ENCODE measurements at regions of chr3 and their contacts with region 1.

Region 1: GRCh38 chr3:119498186-119498987 is at the start of gene TIMMDC1:
- DNase-seq: peak; percentile 95 to 98 (median 97)
- ATAC-seq: peak; percentile 99
- H3K4me3 ChIP-seq: peak within 1 kb of the TSS; percentile 97
- H3K4me3 Mint-ChIP-seq: peak within 1 kb of the TSS; percentile 95 to 100 (median 99)
- H3K27ac ChIP-seq: peak within 1 kb of the TSS; percentile 96
- H3K27ac Mint-ChIP-seq: peak within 1 kb of the TSS; percentile 98 to 100 (median 99)
- H3K4me1 ChIP-seq: peaks cover 18% of the 10 kb centered on the region in 2 donors
- H3K4me1 Mint-ChIP-seq: peaks cover 22 to 41% (median 34%) of the 10 kb centered on the region in 7 donors
- H3K27me3 ChIP-seq: no peaks in the 10 kb centered on the region
- H3K27me3 Mint-ChIP-seq: no peaks in the 10 kb centered on the region
- total RNA-seq, gene TIMMDC1: 27.1 to 80.1 (median 73.4) TPM

Region 2: DNA sequence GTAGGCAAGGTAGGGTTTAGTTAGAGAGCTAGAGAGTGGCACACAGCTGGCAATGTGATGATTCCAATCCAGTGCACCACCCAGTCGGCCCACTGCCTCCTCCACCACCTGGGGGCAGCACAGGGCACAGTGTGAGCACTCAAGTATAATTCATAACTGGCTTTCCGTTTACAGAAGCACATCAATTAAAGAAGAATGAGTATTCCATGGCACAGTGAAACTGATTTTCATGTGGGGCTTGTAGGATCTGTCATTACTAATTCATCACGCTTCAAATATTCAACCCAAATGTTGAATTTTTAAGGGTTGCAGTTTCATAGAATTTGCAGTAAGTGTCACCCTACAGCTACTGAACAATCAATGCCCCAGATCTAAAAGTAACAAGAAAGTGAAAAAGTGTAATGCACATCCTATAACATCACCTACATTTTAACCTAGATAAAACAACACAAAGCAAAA is 613.6 kb before region 1 on chr3:
- CTCF ChIA-PET with region 1: no interaction called
- POLR2A ChIA-PET with region 1: no interaction called
- intact Hi-C with region 1: no loop called
- DNase-seq: peak; percentile 58 to 83 (median 76)
- ATAC-seq: peak; percentile 88
- H3K4me3 ChIP-seq: no peak overlapping the region
- H3K4me3 Mint-ChIP-seq: peak overlapping the region in 5 of 10 donors; percentile 21 to 63 (median 40)
- H3K27ac ChIP-seq: no peak overlapping the region
- H3K27ac Mint-ChIP-seq: no peak overlapping the region
- H3K4me1 ChIP-seq: no peaks in the 10 kb centered on the region
- H3K4me1 Mint-ChIP-seq: peaks cover 0 to 18% (median 7%) of the 10 kb centered on the region in 7 donors
- H3K27me3 ChIP-seq: no peaks in the 10 kb centered on the region
- H3K27me3 Mint-ChIP-seq: peaks cover 8 to 16% (median 11%) of the 10 kb centered on the region in 5 donors

Region 3: DNA sequence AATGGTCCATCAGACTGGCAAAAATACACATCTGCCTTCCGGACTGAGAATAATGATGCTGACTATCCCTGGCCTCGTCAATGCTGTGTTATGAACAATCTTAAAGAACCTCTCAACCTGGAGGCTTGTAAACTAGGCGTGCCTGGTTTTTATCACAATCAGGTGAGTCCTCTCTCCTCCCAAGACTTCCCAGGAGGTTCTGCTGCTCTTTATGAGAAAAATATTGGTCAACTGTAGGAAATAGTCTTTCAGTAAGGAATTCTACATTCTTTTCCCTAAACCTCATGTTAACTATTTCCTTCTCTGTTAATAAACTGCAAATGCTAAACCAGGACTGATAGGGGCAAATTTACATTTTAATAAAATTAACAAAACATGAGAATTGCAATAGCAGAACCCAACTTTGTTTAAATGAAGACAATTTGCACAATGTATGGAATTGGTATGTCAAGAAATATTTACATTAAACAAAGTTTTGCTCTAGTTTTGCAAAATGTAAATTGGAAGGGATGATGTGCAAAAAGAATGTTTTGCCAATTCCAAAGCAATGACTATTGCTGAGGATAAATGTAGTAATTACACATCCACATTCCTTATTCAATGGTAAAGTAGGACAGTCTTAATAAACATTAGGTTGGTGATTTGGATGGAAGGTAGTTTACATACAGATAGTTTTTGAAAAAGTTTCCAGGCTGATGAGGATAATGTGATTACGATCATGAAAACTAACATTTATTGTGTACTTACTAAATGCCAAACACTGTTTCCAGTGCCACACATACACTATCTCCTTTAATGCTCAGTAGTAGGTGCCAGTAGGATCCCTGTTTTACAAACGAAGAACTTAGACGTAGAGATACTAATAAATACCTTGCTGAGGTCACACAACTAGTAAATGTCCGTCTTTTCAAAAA is 303.9 kb before region 1 on chr3:
- CTCF ChIA-PET with region 1: no interaction called
- POLR2A ChIA-PET with region 1: no interaction called
- intact Hi-C with region 1: no loop called
- DNase-seq: no peak
- ATAC-seq: no peak
- H3K4me3 ChIP-seq: no peak overlapping the region
- H3K4me3 Mint-ChIP-seq: no peak overlapping the region
- H3K27ac ChIP-seq: no peak overlapping the region
- H3K27ac Mint-ChIP-seq: no peak overlapping the region
- H3K4me1 ChIP-seq: no peaks in the 10 kb centered on the region
- H3K4me1 Mint-ChIP-seq: no peaks in the 10 kb centered on the region
- H3K27me3 ChIP-seq: no peaks in the 10 kb centered on the region
- H3K27me3 Mint-ChIP-seq: no peaks in the 10 kb centered on the region

Region 4: GRCh38 chr3:119293871-119294695 is 204.3 kb before region 1 on chr3 and contains the start of gene ARHGAP31:
- CTCF ChIA-PET with region 1: no interaction called
- POLR2A ChIA-PET with region 1: interaction called, 5 read pairs
- intact Hi-C with region 1: loop called (anchors 1 to 10 kb)
- DNase-seq: peak; percentile 70 to 91 (median 86)
- ATAC-seq: peak; percentile 77
- H3K4me3 ChIP-seq: peak within 1 kb of the TSS; percentile 50
- H3K4me3 Mint-ChIP-seq: peak within 1 kb of the TSS; percentile 68 to 95 (median 90)
- H3K27ac ChIP-seq: peak within 1 kb of the TSS; percentile 91
- H3K27ac Mint-ChIP-seq: peak within 1 kb of the TSS; percentile 71 to 99 (median 92)
- H3K4me1 ChIP-seq: peaks cover 22 to 26% of the 10 kb centered on the region in 2 donors
- H3K4me1 Mint-ChIP-seq: peaks cover 26 to 74% (median 63%) of the 10 kb centered on the region in 7 donors
- H3K27me3 ChIP-seq: no peaks in the 10 kb centered on the region
- H3K27me3 Mint-ChIP-seq: peaks cover 0 to 43% (median 0%) of the 10 kb centered on the region in 5 donors
- total RNA-seq, gene ARHGAP31: 3.0 to 11.9 (median 3.1) TPM

Region 5: GRCh38 chr3:119463171-119464169 is 34.9 kb before region 1 on chr3 and contains the start of gene TMEM39A:
- CTCF ChIA-PET with region 1: interaction called, 6 read pairs
- POLR2A ChIA-PET with region 1: interaction called, 92 read pairs
- intact Hi-C with region 1: loop called (anchors 1 kb)
- DNase-seq: peak; percentile 97 to 99 (median 98)
- ATAC-seq: peak; percentile 91
- H3K4me3 ChIP-seq: peak within 1 kb of the TSS; percentile 93
- H3K4me3 Mint-ChIP-seq: peak within 1 kb of the TSS; percentile 82 to 96 (median 93)
- H3K27ac ChIP-seq: peak within 1 kb of the TSS; percentile 86
- H3K27ac Mint-ChIP-seq: peak within 1 kb of the TSS; percentile 97 to 100 (median 99)
- H3K4me1 ChIP-seq: peaks cover 16 to 26% of the 10 kb centered on the region in 2 donors
- H3K4me1 Mint-ChIP-seq: peaks cover 22 to 56% (median 45%) of the 10 kb centered on the region in 7 donors
- H3K27me3 ChIP-seq: no peaks in the 10 kb centered on the region
- H3K27me3 Mint-ChIP-seq: peaks cover 0 to 4% (median 0%) of the 10 kb centered on the region in 5 donors
- total RNA-seq, gene TMEM39A: 34.9 to 59.5 (median 49.7) TPM

Region 6: GRCh38 chr3:119485563-119485962 is 12.8 kb before region 1 on chr3:
- CTCF ChIA-PET with region 1: interaction called, 4 read pairs
- POLR2A ChIA-PET with region 1: interaction called, 10 read pairs
- intact Hi-C with region 1: no loop called
- DNase-seq: no peak
- ATAC-seq: no peak
- H3K4me3 ChIP-seq: no peak overlapping the region
- H3K4me3 Mint-ChIP-seq: no peak overlapping the region
- H3K27ac ChIP-seq: no peak overlapping the region
- H3K27ac Mint-ChIP-seq: no peak overlapping the region
- H3K4me1 ChIP-seq: no peaks in the 10 kb centered on the region
- H3K4me1 Mint-ChIP-seq: peaks cover 0 to 6% (median 0%) of the 10 kb centered on the region in 7 donors
- H3K27me3 ChIP-seq: no peaks in the 10 kb centered on the region
- H3K27me3 Mint-ChIP-seq: no peaks in the 10 kb centered on the region

Region 7: DNA sequence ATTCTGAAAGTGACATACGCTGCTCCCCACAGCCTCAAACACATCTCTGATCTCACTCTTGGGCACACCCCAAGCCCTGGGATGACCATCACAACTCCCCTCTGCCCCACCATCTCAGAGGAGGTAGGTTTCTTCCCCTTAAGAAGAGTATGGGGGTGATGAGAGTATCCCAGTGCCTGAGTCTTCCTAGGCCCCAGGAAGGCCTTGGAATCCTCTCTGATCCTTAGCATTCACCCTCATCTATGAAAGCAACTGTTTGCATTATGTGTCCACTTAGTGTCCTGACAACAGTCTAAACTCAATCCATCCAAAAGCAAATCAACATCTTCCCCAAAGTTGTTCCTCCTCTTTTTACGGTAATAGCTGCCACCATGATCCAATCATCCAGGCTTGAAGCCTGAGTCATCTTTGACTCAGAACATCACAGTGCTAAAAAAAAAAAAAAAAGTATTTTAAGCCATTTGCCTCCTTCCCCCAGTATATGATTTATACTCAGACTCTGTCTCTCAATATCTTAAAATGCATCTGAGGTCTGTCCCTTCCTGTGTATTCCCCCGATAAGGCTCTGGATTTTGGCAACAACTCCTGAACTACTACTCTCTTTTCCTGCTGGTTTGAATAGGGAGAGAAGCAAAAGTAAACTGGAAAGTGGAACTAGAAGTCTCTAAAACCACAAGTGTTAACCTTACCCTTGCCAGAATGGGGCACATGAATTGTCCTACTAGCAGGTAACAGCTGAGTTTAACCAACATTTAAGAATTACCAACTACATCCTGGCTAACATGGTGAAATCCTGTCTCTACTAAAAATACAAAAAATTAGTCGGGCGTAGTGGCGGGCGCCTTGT is 139.5 kb after region 1 on chr3:
- CTCF ChIA-PET with region 1: no interaction called
- POLR2A ChIA-PET with region 1: no interaction called
- intact Hi-C with region 1: loop called in 1 of 2 experiments (anchors 1 kb)
- DNase-seq: no peak
- ATAC-seq: peak; percentile 63
- H3K4me3 ChIP-seq: no peak overlapping the region
- H3K4me3 Mint-ChIP-seq: peak overlapping the region in 1 of 10 donors; percentile 59
- H3K27ac ChIP-seq: no peak overlapping the region
- H3K27ac Mint-ChIP-seq: peak overlapping the region in 1 of 9 donors; percentile 88
- H3K4me1 ChIP-seq: no peaks in the 10 kb centered on the region
- H3K4me1 Mint-ChIP-seq: peaks cover 0 to 43% (median 0%) of the 10 kb centered on the region in 7 donors
- H3K27me3 ChIP-seq: no peaks in the 10 kb centered on the region
- H3K27me3 Mint-ChIP-seq: no peaks in the 10 kb centered on the region

Region 8: DNA sequence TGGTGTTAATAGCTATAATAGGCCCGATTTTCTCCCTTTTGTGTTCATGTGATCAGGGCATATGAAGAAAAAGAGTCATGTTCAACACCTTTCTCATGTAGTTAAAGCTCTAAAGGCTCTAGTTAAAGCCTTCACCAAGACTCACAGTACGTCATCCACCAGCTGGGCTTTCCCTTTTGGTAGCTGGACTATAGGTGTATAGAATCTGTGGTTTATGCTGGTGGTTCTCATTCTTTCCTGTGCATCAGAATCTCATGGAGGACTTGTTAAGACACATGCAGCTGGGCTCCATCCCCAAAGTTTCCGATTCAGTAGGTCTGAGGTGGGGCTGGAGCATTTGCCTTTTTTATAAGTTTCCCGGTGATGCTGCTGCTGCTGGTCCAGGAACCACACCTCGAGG is 235.4 kb after region 1 on chr3:
- CTCF ChIA-PET with region 1: no interaction called
- POLR2A ChIA-PET with region 1: no interaction called
- intact Hi-C with region 1: no loop called
- DNase-seq: no peak
- ATAC-seq: no peak
- H3K4me3 ChIP-seq: no peak overlapping the region
- H3K4me3 Mint-ChIP-seq: no peak overlapping the region
- H3K27ac ChIP-seq: no peak overlapping the region
- H3K27ac Mint-ChIP-seq: no peak overlapping the region
- H3K4me1 ChIP-seq: no peaks in the 10 kb centered on the region
- H3K4me1 Mint-ChIP-seq: no peaks in the 10 kb centered on the region
- H3K27me3 ChIP-seq: no peaks in the 10 kb centered on the region
- H3K27me3 Mint-ChIP-seq: peaks cover under 1 to 26% (median 3%) of the 10 kb centered on the region in 5 donors

Region 9: DNA sequence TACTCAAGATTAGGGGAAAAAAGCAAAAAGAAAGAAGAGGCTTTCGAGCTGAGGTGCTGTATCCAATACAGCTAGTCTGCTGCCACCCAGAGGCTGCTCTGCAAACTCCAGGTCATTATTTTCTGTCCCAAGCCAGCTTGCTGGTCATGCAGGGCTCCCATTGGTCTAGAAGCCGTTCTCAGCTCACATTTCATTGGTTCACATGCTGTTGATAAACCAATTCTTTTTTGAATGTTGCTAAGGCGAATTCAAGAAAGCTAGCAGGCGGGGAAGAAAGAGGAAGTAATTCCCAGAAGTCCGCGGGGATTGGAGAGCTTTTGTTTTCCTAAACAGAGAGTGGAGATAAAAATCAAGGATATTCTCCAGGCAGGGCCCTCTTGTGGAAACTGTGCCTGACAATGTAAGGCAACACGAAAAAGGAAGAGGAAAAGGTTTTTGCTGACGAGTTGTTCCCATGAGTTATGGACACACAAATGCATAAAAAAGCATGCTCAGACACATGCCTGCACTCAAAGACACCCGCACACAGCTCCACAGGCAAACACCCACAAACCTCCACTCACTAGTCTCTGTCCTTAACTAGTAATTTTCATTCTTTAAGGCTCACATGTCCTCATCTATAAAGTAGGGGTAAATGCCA is 919.0 kb after region 1 on chr3:
- CTCF ChIA-PET with region 1: interaction called, 4 read pairs
- POLR2A ChIA-PET with region 1: no interaction called
- intact Hi-C with region 1: loop called in 1 of 2 experiments (anchors 2 kb)
- DNase-seq: peak; percentile 58 to 83 (median 79)
- ATAC-seq: peak; percentile 100
- H3K4me3 ChIP-seq: peak overlapping the region; percentile 72
- H3K4me3 Mint-ChIP-seq: peak overlapping the region; percentile 80 to 89 (median 88)
- H3K27ac ChIP-seq: no peak overlapping the region
- H3K27ac Mint-ChIP-seq: peak overlapping the region in 8 of 9 donors; percentile 13 to 76 (median 32)
- H3K4me1 ChIP-seq: no peaks in the 10 kb centered on the region
- H3K4me1 Mint-ChIP-seq: peaks cover 16 to 24% (median 18%) of the 10 kb centered on the region in 7 donors
- H3K27me3 ChIP-seq: no peaks in the 10 kb centered on the region
- H3K27me3 Mint-ChIP-seq: peaks cover 0 to 7% (median 6%) of the 10 kb centered on the region in 5 donors

Measured in naive thymus-derived CD4-positive, alpha-beta T cell (primary cell).